ENCODE measurements at regions of chr22 and their contacts with region 1.

Region 1: DNA sequence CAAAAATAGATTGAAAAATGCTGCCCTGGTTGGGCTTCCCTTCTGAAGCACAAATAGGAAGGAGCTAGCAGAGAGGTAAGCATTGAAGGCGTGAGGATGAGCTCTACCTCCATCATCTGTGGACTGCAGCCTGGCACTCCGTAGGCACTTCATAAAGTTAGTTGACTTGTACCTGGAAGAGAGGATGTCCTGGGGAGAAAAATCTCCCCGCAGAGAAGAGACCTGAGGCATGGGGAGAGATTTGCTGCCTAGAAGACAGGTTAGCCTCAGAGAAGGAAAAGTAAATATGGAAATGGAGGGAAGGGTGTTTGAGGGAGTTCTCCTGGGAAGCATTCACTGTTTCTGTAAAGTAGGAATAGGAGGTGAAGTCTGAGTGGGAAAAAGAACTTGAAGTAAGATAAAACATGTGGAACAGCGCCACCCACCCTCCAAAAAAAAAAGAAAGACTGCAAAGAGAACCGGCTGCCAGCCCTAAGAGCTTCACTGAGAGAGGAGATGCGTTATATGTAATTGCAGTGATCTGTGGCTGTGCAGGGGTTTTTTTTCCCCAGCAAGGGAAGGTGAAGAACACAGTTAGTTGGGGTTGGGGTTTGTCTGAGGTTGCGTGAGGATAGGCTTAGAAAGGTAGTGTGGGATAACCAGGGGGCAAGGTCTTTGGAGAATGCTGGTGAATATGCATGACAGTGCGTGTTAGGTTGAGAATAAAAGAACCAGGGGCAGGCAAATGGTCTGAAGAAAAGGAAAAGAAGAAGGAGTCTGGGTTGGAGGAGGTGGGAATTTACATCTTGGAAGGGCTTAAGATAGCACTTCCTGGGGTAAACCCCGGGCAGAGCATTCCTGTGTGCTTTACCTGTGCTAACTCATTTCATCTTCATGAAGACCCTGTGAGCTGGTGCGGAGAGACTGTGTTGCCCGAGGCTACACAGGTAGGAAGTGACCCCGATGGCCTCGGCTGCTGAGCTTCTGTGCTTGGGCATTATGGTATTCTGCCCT is 16.0 kb downstream of the TNRC6B start:
- DNase-seq: no peak
- H3K4me3 ChIP-seq: no peak overlapping the region
- H3K27ac ChIP-seq: no peak overlapping the region
- H3K4me1 ChIP-seq: peaks cover 35% of the 10 kb centered on the region
- H3K27me3 ChIP-seq: no peaks in the 10 kb centered on the region
- CTCF ChIP-seq: peak; percentile 25 to 52

Region 2: GRCh38 chr22:40258451-40259046 is 64.8 kb after region 1 on chr22:
- CTCF ChIA-PET with region 1: no interaction called
- dilution Hi-C with region 1: loop called (anchors 5 kb)
- in situ Hi-C with region 1: no loop called
- intact Hi-C with region 1: loop called (anchors 5 kb)
- DNase-seq: peak; percentile 98
- H3K4me3 ChIP-seq: no peak overlapping the region
- H3K27ac ChIP-seq: peak overlapping the region; percentile 88
- H3K4me1 ChIP-seq: peaks cover 29% of the 10 kb centered on the region
- H3K27me3 ChIP-seq: no peaks in the 10 kb centered on the region
- CTCF ChIP-seq: no peak